Activated CD4-positive, alpha-beta memory T cell treated with anti-CD3 and anti-CD28 coated beads, Interleukin-2, amount 10 ng/mL, durations not matched to agents 7 days and 5 days (primary cell): ENCODE measurements at regions of chr13 and their contacts with region 1.

Region 1: GRCh38 chr13:42333613-42334328 is 61.8 kb downstream of the AKAP11 start:
- DNase-seq: no peak
- H3K4me3 Mint-ChIP-seq: no peak overlapping the region
- H3K27ac Mint-ChIP-seq: peak overlapping the region; percentile 41
- H3K4me1 Mint-ChIP-seq: peaks cover 55% of the 10 kb centered on the region
- H3K27me3 Mint-ChIP-seq: no peaks in the 10 kb centered on the region

Region 2: DNA sequence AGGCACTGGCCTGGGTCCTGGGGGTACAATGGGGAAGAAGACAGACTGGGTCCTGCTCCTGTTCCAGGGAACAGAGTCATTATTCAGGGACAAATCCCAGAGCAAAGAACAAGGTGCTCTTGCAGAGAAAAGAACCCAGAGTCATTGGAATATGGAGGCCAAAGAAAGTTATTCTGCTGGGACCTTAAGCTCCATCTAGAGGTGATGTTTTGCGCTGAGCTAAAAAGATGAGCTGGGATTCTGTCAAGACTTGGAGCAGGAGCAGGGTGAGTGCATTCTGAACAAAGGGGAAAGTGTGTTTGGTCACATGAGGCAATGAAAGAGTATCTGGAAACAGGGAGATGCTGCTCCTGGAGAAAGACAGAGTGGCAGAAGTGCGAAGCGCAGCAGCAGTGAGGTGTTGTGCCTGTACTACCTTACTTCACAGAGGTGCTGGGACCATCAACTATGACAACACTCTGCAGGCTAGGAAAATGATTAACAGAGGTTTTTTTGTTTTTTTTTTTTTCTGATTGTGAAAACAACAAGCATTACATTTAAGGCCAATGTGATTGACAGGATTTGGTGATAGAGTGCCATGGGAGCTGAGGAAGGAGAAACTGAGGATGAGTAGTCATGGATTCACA is 144.9 kb after region 1 on chr13:
- CTCF ChIA-PET with region 1: interaction called, 20 read pairs
- POLR2A ChIA-PET with region 1: interaction called, 3 read pairs
- DNase-seq: no peak
- H3K4me3 Mint-ChIP-seq: no peak overlapping the region
- H3K27ac Mint-ChIP-seq: no peak overlapping the region
- H3K4me1 Mint-ChIP-seq: peaks cover 25% of the 10 kb centered on the region
- H3K27me3 Mint-ChIP-seq: no peaks in the 10 kb centered on the region

Region 3: DNA sequence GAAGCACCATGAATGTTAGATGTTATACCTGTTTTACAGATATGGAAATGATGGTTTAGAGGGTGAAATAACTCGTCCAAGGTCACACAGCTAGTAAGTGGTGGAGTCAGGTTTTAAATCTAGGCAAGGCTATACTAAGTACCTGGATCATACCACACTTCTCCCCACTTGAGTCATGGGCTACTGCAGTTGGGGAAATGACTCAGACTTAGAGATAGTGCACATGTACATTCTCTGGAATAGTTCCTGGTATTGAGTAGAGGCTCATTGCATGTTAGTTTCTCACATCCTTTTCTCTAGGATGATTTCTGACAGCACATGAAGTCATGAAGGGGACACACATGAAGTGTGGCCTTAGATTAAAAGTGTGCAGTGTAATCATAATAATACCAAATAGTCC is 164.0 kb after region 1 on chr13:
- CTCF ChIA-PET with region 1: interaction called, 10 read pairs
- POLR2A ChIA-PET with region 1: interaction called, 3 read pairs
- DNase-seq: peak; percentile 49
- H3K4me3 Mint-ChIP-seq: no peak overlapping the region
- H3K27ac Mint-ChIP-seq: peak overlapping the region; percentile 83
- H3K4me1 Mint-ChIP-seq: peaks cover 58% of the 10 kb centered on the region
- H3K27me3 Mint-ChIP-seq: no peaks in the 10 kb centered on the region